ENCODE measurements at regions of chr7 and their contacts with region 1.

Region 1: GRCh38 chr7:16098585-16099179 is 322.7 kb downstream of the CRPPA start:
- DNase-seq: no peak
- H3K4me3 ChIP-seq: no peak overlapping the region
- H3K27ac ChIP-seq: no peak overlapping the region
- H3K4me1 ChIP-seq: no peaks in the 10 kb centered on the region; a peak in 1 of 4 replicates
- H3K27me3 ChIP-seq: no peaks in the 10 kb centered on the region
- CTCF ChIP-seq: peak; percentile 93
- EP300 ChIP-seq: no peak
- RAD21 ChIP-seq: peak; percentile 60

Region 2: GRCh38 chr7:15921576-15921975 is 177.1 kb before region 1 on chr7:
- CTCF ChIA-PET with region 1: no interaction called
- POLR2A ChIA-PET with region 1: no interaction called
- DNase-seq: no peak
- H3K4me3 ChIP-seq: no peak overlapping the region
- H3K27ac ChIP-seq: no peak overlapping the region
- H3K4me1 ChIP-seq: 0 out of 4 replicates have a peak, but pooled peaks cover 0 to 6% of the 10 kb centered on the region in 2 experiments
- H3K27me3 ChIP-seq: no peaks in the 10 kb centered on the region; the same call in 1 of the 2 replicates
- CTCF ChIP-seq: peak; percentile 36; the same call in 1 of the 2 replicates
- EP300 ChIP-seq: no peak
- RAD21 ChIP-seq: no peak

Region 3: GRCh38 chr7:16083931-16084330 is 14.8 kb before region 1 on chr7:
- CTCF ChIA-PET with region 1: interaction called, 35 read pairs
- POLR2A ChIA-PET with region 1: no interaction called
- DNase-seq: no peak
- H3K4me3 ChIP-seq: no peak overlapping the region
- H3K27ac ChIP-seq: peak overlapping the region in 1 of 2 experiments; percentile 71; a peak in 1 of 4 replicates
- H3K4me1 ChIP-seq: peaks cover 12 to 13% of the 10 kb centered on the region in 2 experiments; a peak in 3 of 4 replicates
- H3K27me3 ChIP-seq: no peaks in the 10 kb centered on the region
- CTCF ChIP-seq: no peak
- EP300 ChIP-seq: no peak
- RAD21 ChIP-seq: no peak

Measured in SK-N-SH (cell line).